Activated T-helper 1 cell treated with anti-CD3 and anti-CD28 coated beads, Interleukin-12 subunit alpha, Interleukin-12 subunit beta, Interleukin-2, Interleukin-4 antibody, amounts not matched to agents 30 ng/mL and 10 ng/mL and 1 ng/mL, durations not matched to agents 14 hours and 24 hours and 36 hours (primary cell): ENCODE measurements at regions of chr4 and their contacts with region 1.

Region 1: DNA sequence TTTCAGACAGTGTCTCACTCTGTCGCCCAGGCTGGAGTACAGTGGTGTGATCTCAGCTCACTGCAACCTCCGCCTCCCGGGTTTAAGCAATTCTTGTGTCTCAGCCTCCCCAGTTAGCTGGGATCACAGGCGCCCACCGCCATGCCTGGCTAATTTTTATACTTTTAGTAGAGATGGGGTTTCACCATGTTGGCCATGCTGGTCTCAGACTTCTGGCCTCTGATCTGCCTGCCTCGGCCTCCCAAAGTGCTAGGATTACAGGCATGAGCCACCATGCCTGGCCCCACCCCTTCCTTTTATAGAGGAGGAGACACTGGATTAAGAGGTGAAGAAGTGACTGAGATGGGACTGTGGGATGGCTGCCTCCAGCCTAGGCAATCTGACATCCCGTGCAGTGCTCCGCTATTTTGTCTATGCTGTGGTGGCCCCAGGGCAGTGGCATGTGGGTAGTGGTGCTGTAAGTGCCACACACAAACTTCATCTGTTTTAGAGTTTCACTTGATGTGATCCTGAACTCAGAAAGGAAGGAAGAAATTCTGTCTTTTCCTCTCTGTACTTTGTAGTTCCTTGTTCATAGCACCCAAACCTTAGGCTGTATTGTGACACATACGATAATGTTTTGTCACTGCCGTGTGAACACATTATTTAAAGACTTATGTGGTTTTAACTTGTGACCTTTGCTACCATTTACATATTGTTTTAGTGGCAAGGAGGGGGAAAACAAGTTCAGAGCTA is 48.9 kb downstream of the FNIP2 start:
- DNase-seq: no peak
- H3K4me3 Mint-ChIP-seq: no peak overlapping the region
- H3K27ac Mint-ChIP-seq: peak overlapping the region; percentile 69
- H3K4me1 Mint-ChIP-seq: peaks cover 61% of the 10 kb centered on the region
- H3K27me3 Mint-ChIP-seq: no peaks in the 10 kb centered on the region

Region 2: DNA sequence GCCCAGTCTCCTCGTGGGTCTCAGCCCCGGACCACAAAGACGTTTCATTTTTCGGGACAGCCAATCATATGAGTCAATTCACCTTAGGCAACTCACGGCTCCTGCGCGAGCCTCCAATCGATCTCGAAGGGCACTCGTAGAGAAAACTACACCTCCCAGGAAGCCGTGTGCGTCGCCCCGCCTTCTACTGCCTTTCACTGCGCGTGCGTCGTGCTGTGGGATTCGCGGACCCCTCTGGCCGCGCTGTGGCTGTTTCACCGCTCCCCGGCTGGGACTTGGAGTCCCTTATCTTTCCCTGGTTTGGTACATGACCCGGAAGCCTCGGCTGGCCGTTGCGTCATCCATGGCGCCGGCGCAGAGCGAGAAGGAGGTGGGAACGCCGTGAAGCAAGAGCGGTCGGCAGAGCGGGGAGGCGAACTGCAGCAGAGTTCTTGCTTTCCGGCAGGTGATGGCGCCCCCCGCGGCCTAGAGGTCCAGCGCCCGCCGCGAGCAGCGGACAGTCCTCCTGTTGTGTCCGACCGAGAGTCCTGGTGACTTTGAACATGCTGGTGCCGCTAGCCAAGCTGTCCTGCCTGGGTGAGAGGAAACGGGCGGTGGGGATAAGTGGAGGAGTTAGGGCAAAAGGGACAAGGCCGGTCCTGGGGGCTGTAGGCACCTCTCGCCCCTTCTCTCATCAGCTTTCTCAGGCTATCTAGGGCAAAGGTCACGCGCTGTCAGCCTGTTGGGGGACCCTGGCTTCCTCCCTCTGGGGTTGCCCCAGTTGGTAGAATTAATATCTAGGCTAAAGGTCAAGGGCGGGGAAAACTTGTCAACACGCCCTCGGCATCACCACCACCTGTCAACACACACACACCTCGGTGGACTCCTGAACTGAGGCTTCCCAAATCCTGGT is 145.6 kb before region 1 on chr4 and contains the start of gene ETFDH:
- intact Hi-C with region 1: loop called (anchors 2 kb)
- DNase-seq: peak; percentile 98
- H3K4me3 Mint-ChIP-seq: peak within 1 kb of the TSS; percentile 99
- H3K27ac Mint-ChIP-seq: peak within 1 kb of the TSS; percentile 96
- H3K4me1 Mint-ChIP-seq: peaks cover 46% of the 10 kb centered on the region
- H3K27me3 Mint-ChIP-seq: peaks cover 2% of the 10 kb centered on the region
- total RNA-seq, gene ETFDH: 19.9 and 21.5 TPM in 2 replicates

Region 3: GRCh38 chr4:158722917-158723793 is 94.6 kb before region 1 on chr4 and contains the start of gene PPID:
- intact Hi-C with region 1: loop called (anchors 2 kb)
- DNase-seq: peak; percentile 80
- H3K4me3 Mint-ChIP-seq: peak within 1 kb of the TSS; percentile 95
- H3K27ac Mint-ChIP-seq: peak within 1 kb of the TSS; percentile 100
- H3K4me1 Mint-ChIP-seq: peaks cover 59% of the 10 kb centered on the region
- H3K27me3 Mint-ChIP-seq: peaks cover 5% of the 10 kb centered on the region
- total RNA-seq, gene PPID: 52.8 and 55.4 TPM in 2 replicates

Region 4: DNA sequence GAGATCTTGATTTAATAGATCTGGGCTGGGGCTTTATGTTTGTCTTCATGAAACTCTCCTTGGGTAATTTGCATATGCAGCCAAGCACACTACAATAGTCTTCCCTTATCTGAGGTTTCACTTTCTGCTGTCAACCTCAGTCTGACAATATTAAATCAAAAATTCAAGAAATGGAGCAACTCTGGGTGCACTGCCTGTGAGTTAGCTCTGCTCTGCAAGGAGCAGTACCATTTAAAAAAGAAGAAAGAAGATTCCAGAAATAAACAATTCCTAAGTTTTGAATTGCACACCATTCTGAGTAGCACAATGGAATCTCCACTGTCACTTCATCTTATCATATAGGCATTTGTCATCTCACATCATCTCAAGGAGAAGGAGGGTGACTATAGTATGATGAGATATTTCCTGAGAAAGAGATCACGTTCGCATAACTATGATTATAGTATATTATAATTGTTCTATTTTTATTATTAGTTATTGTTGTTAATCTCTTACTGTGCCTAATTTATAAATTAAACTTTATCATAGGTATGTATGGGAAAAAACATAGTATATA is 39.5 kb before region 1 on chr4:
- intact Hi-C with region 1: loop called (anchors 1 kb)
- DNase-seq: no peak
- H3K4me3 Mint-ChIP-seq: no peak overlapping the region
- H3K27ac Mint-ChIP-seq: peak overlapping the region; percentile 79
- H3K4me1 Mint-ChIP-seq: peaks cover 44% of the 10 kb centered on the region
- H3K27me3 Mint-ChIP-seq: no peaks in the 10 kb centered on the region

Region 5: GRCh38 chr4:158801066-158801465 is 16.7 kb before region 1 on chr4:
- intact Hi-C with region 1: no loop called
- DNase-seq: no peak
- H3K4me3 Mint-ChIP-seq: no peak overlapping the region
- H3K27ac Mint-ChIP-seq: no peak overlapping the region
- H3K4me1 Mint-ChIP-seq: peaks cover 17% of the 10 kb centered on the region
- H3K27me3 Mint-ChIP-seq: no peaks in the 10 kb centered on the region

Region 6: GRCh38 chr4:158850800-158851644 is 33.3 kb after region 1 on chr4:
- intact Hi-C with region 1: loop called (anchors 2 kb)
- DNase-seq: no peak
- H3K4me3 Mint-ChIP-seq: no peak overlapping the region
- H3K27ac Mint-ChIP-seq: no peak overlapping the region
- H3K4me1 Mint-ChIP-seq: peaks cover 14% of the 10 kb centered on the region
- H3K27me3 Mint-ChIP-seq: no peaks in the 10 kb centered on the region